Caco-2 (cell line): ENCODE measurements at regions of chr6 and their contacts with region 1.

Region 1: GRCh38 chr6:79949233-79949632 is 1.9 kb upstream of the ELOVL4 start:
- DNase-seq: peak; percentile 68 to 72
- H3K4me3 ChIP-seq: no peak overlapping the region
- H3K4me3 Mint-ChIP-seq: no peak overlapping the region
- H3K27ac Mint-ChIP-seq: no peak overlapping the region
- H3K4me1 ChIP-seq: no peaks in the 10 kb centered on the region
- H3K4me1 Mint-ChIP-seq: no peaks in the 10 kb centered on the region
- H3K27me3 ChIP-seq: no peaks in the 10 kb centered on the region
- H3K27me3 Mint-ChIP-seq: peaks cover 11% of the 10 kb centered on the region
- CTCF ChIP-seq: peak; percentile 61 to 68

Region 2: DNA sequence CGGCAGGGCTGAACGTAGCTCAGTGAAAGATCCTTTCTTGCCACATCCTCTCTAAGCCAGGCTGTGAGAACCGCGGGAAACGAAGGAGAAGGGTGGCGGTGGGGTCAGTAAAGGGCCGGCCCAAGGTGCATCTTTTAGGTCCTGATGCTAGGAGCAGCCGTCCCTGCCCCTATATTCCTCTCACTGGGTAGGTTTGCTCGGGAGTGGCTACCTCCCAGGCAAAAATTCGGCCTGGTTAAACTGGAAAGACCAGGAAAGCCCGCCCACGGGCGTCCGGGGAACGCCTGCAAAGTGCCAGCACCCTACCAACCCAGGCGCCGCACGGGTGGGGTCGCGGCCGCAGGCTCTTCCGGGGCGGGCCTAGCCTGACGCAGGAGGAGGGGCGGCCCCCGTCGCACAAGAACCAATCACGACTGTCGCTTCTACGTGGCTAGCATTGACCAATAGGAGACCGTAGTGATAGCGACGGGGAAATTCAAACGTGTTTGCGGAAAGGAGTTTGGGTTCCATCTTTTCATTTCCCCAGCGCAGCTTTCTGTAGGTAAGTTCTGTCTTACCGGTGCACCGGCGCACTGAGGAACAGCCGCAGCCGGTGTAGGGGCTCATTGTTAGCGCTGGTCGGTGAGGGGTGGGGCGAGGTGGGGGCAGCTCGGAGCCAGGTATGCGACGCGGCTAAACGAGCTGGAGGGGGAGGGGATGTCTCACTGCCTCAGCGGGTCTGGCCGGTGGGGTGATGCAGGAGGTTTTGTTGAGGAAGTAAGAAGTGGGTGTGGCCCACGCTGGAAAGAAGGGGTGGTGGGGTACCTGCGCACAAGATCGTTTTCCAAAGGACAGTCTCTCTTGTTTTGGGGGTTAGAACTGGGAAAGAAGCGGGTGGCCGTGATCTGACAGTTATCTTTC is 55.2 kb after region 1 on chr6 and contains the start of gene TTK:
- CTCF ChIA-PET with region 1: interaction called, 5 read pairs
- POLR2A ChIA-PET with region 1: interaction called, 3 read pairs
- intact Hi-C with region 1: loop called (anchors 2 kb)
- DNase-seq: peak; percentile 94 to 95
- H3K4me3 ChIP-seq: peak within 1 kb of the TSS; percentile 93
- H3K4me3 Mint-ChIP-seq: peak within 1 kb of the TSS; percentile 86
- H3K27ac Mint-ChIP-seq: peak within 1 kb of the TSS; percentile 75
- H3K4me1 ChIP-seq: peaks cover 12% of the 10 kb centered on the region; the same call in 1 of the 2 replicates
- H3K4me1 Mint-ChIP-seq: peaks cover 9% of the 10 kb centered on the region
- H3K27me3 ChIP-seq: no peaks in the 10 kb centered on the region
- H3K27me3 Mint-ChIP-seq: no peaks in the 10 kb centered on the region
- CTCF ChIP-seq: no peak
- total RNA-seq, gene TTK: 37.4 and 40.0 TPM in 2 replicates